Activated CD4-positive, alpha-beta memory T cell treated with anti-CD3 and anti-CD28 coated beads for 36 hours (primary cell): ENCODE measurements at regions of chr2 and their contacts with region 1.

Region 1: DNA sequence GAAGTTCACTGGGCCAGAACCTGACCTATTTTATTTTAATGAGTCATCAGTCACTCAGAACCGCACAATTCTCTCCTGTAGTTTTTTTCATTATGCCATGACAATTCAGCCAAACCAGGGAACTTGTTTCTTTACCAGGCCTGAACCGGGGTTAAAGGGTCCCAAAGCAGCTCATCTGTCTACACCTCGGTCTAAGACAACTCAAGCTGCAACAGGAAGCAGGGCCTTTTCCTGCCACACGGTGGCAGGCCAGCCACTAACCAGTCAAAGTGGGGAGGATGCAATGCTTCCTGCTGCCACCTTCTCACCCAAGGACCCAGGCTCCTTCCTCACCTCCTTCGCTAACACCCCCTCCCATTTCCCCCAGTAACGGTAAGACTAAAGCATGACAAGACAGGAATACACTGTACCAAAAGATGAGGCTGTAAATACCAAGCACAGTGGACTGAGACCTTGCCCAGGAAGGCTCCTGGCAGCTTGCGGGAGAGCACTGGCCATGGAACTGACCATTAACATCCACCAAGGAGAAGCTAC is 56.7 kb upstream of the ACKR3 start:
- DNase-seq: peak; percentile 81
- H3K4me3 Mint-ChIP-seq: no peak overlapping the region
- H3K27ac Mint-ChIP-seq: no peak overlapping the region
- H3K4me1 Mint-ChIP-seq: peaks cover 6% of the 10 kb centered on the region
- H3K27me3 Mint-ChIP-seq: peaks cover 7% of the 10 kb centered on the region

Region 2: GRCh38 chr2:236352761-236353593 is 160.0 kb before region 1 on chr2:
- CTCF ChIA-PET with region 1: interaction called, 12 read pairs
- POLR2A ChIA-PET with region 1: no interaction called
- intact Hi-C with region 1: loop called (anchors 2 kb)
- DNase-seq: peak; percentile 33
- H3K4me3 Mint-ChIP-seq: no peak overlapping the region
- H3K27ac Mint-ChIP-seq: no peak overlapping the region
- H3K4me1 Mint-ChIP-seq: peaks cover 2% of the 10 kb centered on the region
- H3K27me3 Mint-ChIP-seq: no peaks in the 10 kb centered on the region

Region 3: GRCh38 chr2:236545814-236546480 is 33.0 kb after region 1 on chr2:
- CTCF ChIA-PET with region 1: interaction called, 16 read pairs
- POLR2A ChIA-PET with region 1: interaction called, 3 read pairs
- intact Hi-C with region 1: no loop called
- DNase-seq: peak; percentile 44
- H3K4me3 Mint-ChIP-seq: peak overlapping the region; percentile 65
- H3K27ac Mint-ChIP-seq: peak overlapping the region; percentile 81
- H3K4me1 Mint-ChIP-seq: peaks cover 81% of the 10 kb centered on the region
- H3K27me3 Mint-ChIP-seq: no peaks in the 10 kb centered on the region

Region 4: GRCh38 chr2:236558993-236559978 is 46.3 kb after region 1 on chr2:
- CTCF ChIA-PET with region 1: interaction called, 23 read pairs
- POLR2A ChIA-PET with region 1: no interaction called
- intact Hi-C with region 1: no loop called
- DNase-seq: no peak
- H3K4me3 Mint-ChIP-seq: no peak overlapping the region
- H3K27ac Mint-ChIP-seq: no peak overlapping the region
- H3K4me1 Mint-ChIP-seq: peaks cover 47% of the 10 kb centered on the region
- H3K27me3 Mint-ChIP-seq: no peaks in the 10 kb centered on the region

Region 5: DNA sequence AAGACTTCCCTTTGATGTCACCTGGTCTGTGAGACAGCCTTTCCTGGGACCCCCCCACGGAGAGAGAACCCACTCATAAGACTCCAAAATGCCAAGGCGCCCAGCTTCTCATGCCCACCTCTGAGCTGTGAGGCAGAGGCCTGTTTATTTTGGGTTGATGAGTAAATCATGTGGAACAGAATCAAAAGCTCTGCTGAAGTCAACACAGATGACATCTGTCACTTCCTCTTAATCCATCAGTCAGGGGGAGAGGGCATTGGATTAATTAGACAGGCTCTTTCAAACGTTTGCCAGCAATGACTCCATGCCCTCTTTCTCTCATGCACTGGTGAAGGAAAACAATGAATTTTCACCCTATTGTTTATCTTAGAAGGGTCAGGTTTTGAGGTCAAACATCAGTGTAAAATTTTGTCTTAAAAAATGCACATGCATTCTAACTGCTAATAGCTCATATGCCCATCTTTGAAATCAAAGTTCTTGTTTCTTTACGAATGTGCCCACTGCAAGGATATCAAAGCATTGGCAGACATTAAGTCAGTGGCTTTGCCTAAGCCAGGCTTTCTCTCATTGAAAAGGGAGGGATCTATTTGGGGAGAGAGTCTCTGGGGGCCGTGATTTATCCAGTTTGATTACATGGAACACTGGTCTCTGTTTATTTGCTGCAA is 240.8 kb after region 1 on chr2:
- CTCF ChIA-PET with region 1: no interaction called
- POLR2A ChIA-PET with region 1: no interaction called
- intact Hi-C with region 1: no loop called
- DNase-seq: no peak
- H3K4me3 Mint-ChIP-seq: no peak overlapping the region
- H3K27ac Mint-ChIP-seq: no peak overlapping the region
- H3K4me1 Mint-ChIP-seq: no peaks in the 10 kb centered on the region
- H3K27me3 Mint-ChIP-seq: peaks cover 5% of the 10 kb centered on the region

Region 6: GRCh38 chr2:237026981-237027711 is 514.2 kb after region 1 on chr2:
- CTCF ChIA-PET with region 1: interaction called, 37 read pairs
- POLR2A ChIA-PET with region 1: no interaction called
- intact Hi-C with region 1: no loop called
- DNase-seq: peak; percentile 60
- H3K4me3 Mint-ChIP-seq: no peak overlapping the region
- H3K27ac Mint-ChIP-seq: no peak overlapping the region
- H3K4me1 Mint-ChIP-seq: no peaks in the 10 kb centered on the region
- H3K27me3 Mint-ChIP-seq: peaks cover 2% of the 10 kb centered on the region

Region 7: GRCh38 chr2:237072067-237072931 is 559.3 kb after region 1 on chr2:
- CTCF ChIA-PET with region 1: interaction called, 13 read pairs
- POLR2A ChIA-PET with region 1: no interaction called
- intact Hi-C with region 1: loop called (anchors 1 kb)
- DNase-seq: peak; percentile 81
- H3K4me3 Mint-ChIP-seq: no peak overlapping the region
- H3K27ac Mint-ChIP-seq: no peak overlapping the region
- H3K4me1 Mint-ChIP-seq: no peaks in the 10 kb centered on the region
- H3K27me3 Mint-ChIP-seq: no peaks in the 10 kb centered on the region